ENCODE measurements at regions of chr12 and their contacts with region 1.

Region 1: DNA sequence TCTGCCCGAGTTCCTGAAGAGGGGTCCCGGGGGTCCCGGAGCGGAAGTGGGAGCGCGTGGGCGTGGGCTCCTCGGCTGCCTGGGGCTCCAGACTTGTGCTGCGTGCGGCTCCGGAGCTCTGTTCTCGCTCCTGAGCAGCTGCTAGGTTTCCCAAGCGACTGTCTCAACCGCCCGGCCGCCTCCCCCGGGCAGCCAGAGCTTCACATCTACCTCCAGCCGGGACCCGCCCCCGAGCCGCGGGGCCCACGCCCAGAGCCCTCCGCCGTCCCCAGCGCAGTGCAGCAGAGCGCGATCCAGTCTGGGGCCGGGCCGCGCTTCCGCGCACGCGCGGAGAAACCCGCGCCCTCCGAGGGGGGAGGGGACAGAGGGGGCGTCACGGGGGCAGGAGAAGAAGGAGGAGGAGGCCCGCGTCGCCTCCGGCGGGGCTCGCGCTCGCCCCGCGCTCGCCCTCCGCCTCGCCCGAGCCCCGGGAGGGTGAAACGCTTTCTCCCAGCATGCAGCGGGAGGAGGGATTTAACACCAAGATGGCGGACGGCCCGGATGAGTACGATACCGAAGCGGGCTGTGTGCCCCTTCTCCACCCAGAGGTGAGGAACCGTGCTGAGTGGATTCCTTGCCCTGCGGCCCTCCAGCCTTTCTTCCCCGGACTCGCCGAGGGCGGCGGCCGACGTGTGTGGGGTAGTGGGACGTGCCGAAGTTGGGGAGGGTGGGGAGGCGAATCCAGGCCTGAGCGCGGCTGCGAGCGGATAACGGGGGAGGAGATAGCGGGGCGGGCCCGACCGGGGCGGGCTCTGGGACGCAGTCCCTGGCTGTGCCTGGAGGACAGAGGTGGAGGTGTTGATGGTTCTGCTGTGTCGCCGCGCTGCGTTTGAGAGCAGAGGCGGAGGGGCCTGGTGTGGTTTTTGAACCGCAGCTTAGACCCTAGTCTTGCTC is at the start of gene ZDHHC17:
- DNase-seq: peak; percentile 80 to 92
- ATAC-seq: peak; percentile 85 to 87
- H3K4me3 ChIP-seq: peak within 1 kb of the TSS; percentile 75 to 99 (median 86)
- H3K27ac ChIP-seq: peak within 1 kb of the TSS; percentile 92 to 100 (median 98)
- H3K4me1 ChIP-seq: peaks cover 26 to 41% of the 10 kb centered on the region in 2 donors
- H3K27me3 ChIP-seq: no peaks in the 10 kb centered on the region
- CTCF ChIP-seq: peak in 1 of 5 experiments; percentile 14
- POLR2A ChIP-seq: peak; percentile 70 to 79
- total RNA-seq, gene ZDHHC17: 15.5 to 35.6 (median 19.3) TPM

Region 2: GRCh38 chr12:76462668-76463224 is 301.3 kb before region 1 on chr12:
- in situ Hi-C with region 1: no loop called
- intact Hi-C with region 1: loop called (anchors 10 kb)
- DNase-seq: no peak
- ATAC-seq: no peak
- H3K4me3 ChIP-seq: no peak overlapping the region
- H3K27ac ChIP-seq: no peak overlapping the region
- H3K4me1 ChIP-seq: peaks cover 37 to 47% of the 10 kb centered on the region in 2 donors
- H3K27me3 ChIP-seq: no peaks in the 10 kb centered on the region
- CTCF ChIP-seq: no peak
- POLR2A ChIP-seq: no peak

Region 3: DNA sequence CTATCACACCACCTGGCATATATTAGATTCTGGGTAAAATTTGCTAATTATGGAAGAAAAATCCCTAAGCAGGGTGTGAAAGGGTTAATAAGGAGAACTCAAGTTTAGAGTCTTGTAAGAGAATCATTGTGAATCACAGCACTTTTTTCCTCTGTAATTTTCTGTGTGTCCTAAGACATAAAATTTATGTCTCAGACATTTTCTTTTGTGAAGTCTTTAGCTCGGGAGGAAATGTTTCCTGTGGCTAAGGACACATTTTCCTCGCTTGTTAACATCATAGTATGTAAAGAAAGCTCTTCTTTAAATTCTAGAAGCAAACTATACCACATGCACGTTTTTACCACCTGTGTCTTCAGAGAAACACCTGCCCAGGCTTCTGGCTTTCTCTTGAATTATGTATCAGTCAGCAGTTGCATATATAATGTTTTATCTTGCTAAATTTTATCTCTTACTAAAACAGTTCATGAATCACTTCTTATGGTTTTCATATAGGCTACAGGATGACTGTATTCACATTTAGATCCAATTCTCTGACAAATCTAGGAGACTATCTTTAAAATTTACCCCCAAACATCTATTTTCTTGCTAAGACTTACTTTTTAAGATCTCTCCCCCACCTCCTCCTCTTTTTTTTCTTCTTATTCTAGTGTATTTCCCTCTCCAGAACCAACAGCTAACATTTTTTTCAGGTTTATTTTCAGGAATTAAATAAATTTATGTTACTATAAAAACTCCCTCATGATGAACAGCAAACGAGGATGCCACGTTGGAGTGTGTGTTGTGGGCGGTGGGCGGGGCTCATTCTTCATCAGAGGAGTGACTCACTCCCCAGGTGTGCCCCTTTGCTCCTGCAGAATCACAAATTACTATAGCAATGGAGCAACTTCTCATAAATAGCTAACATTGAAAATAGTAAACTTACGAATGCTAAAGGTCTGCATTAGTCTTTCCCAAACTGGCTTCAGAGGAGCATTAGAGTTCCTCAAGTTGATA is 126.4 kb after region 1 on chr12:
- in situ Hi-C with region 1: no loop called
- intact Hi-C with region 1: no loop called
- DNase-seq: no peak
- ATAC-seq: no peak
- H3K4me3 ChIP-seq: no peak overlapping the region
- H3K27ac ChIP-seq: no peak overlapping the region
- H3K4me1 ChIP-seq: no peaks in the 10 kb centered on the region
- H3K27me3 ChIP-seq: no peaks in the 10 kb centered on the region
- CTCF ChIP-seq: no peak
- POLR2A ChIP-seq: no peak